Natural killer cell (primary cell): ENCODE measurements at regions of chr17 and their contacts with region 1.

Region 1: DNA sequence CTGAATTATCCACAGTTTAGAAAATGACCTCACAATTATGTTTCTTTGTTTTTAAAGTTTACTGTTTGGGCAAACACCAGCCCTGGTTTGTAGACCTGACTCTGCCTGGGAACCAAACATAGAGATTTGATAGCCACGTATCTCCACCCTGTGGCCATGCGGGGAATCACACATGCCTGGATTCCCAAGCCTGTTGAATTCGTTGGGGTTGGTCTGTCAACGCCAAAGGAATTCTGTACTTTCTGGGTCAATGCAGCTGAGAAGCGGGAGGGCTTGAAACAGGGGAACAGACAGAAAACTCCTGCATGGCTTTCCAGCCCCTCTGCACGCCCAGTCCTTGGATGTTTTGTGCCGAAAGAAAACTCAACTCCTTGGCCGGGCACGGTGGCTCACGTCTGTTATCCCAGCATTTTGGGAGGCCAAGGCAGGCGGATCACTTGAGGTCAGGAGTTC is 27.0 kb downstream of the CD300A start:
- DNase-seq: peak; percentile 63 to 85
- ATAC-seq: peak; percentile 87 to 93 (median 90)
- H3K4me3 ChIP-seq: no peak overlapping the region
- H3K4me3 Mint-ChIP-seq: peak overlapping the region; percentile 68
- H3K27ac ChIP-seq: no peak overlapping the region
- H3K27ac Mint-ChIP-seq: peak overlapping the region; percentile 78 to 88
- H3K4me1 ChIP-seq: peaks cover 35% of the 10 kb centered on the region
- H3K4me1 Mint-ChIP-seq: peaks cover 40 to 66% of the 10 kb centered on the region in 2 donors
- H3K27me3 ChIP-seq: no peaks in the 10 kb centered on the region
- H3K27me3 Mint-ChIP-seq: no peaks in the 10 kb centered on the region
- CTCF ChIP-seq: peak; percentile 86

Region 2: GRCh38 chr17:74305865-74306654 is 187.3 kb before region 1 on chr17:
- intact Hi-C with region 1: loop called (anchors 10 kb)
- DNase-seq: no peak
- ATAC-seq: no peak
- H3K4me3 ChIP-seq: no peak overlapping the region
- H3K4me3 Mint-ChIP-seq: no peak overlapping the region
- H3K27ac ChIP-seq: no peak overlapping the region
- H3K27ac Mint-ChIP-seq: no peak overlapping the region
- H3K4me1 ChIP-seq: peaks cover 8% of the 10 kb centered on the region
- H3K4me1 Mint-ChIP-seq: peaks cover 6 to 11% of the 10 kb centered on the region in 2 donors
- H3K27me3 ChIP-seq: no peaks in the 10 kb centered on the region
- H3K27me3 Mint-ChIP-seq: no peaks in the 10 kb centered on the region
- CTCF ChIP-seq: no peak

Region 3: DNA sequence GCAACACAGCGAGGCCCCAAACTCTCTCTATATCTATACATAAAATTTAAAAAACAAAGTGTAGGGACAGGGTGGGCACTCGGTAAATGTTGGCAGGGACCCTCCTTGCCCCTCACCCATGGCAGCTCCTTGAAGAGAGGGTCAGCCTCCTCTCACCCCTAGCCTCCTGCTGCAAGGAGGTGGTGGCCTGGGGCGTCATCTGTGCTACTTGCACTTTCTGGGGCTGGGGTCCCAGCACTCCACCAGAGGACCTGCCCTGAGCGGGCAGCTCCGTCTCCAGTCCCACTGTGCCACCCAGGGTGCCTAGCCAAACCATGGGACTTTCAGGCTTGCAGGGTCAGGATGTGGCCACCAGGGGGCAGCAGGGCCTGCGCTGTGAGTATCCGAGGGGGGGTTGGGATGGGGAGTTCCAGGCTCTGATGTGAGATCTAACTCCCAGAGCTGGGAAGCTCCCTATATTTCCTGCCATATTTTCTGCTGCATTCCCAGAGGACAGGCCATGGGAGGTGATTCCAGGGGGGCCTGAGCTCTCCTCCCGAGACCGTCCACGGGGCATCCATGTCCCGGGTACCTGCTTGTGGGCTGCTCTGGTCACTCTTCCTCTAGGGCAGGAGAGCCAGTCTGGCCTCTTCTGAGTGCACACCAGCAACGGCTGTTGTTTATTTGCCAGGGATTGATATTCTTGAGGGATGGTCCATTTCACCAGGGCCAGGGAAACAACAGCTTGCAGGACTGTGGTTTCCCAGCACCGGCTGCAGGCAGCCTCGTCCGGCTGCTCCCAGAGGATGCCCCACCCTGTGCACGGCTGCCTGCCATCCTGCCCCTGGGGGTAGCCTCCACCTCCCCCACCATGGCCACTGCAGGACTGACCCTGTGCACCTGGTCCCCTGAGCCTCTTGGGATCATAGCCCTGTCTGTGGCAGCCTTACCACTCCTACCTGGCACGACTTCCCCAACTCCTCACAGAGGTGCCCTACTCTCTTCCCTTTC is 125.0 kb before region 1 on chr17:
- intact Hi-C with region 1: loop called (anchors 1 kb)
- DNase-seq: peak; percentile 78 to 87
- ATAC-seq: peak; percentile 76 to 90 (median 90)
- H3K4me3 ChIP-seq: no peak overlapping the region
- H3K4me3 Mint-ChIP-seq: peak overlapping the region; percentile 71
- H3K27ac ChIP-seq: no peak overlapping the region
- H3K27ac Mint-ChIP-seq: peak overlapping the region in 1 of 2 donors; percentile 75
- H3K4me1 ChIP-seq: peaks cover 20% of the 10 kb centered on the region
- H3K4me1 Mint-ChIP-seq: peaks cover 17 to 18% of the 10 kb centered on the region in 2 donors
- H3K27me3 ChIP-seq: peaks cover 2% of the 10 kb centered on the region
- H3K27me3 Mint-ChIP-seq: peaks cover 0 to 6% of the 10 kb centered on the region in 2 donors
- CTCF ChIP-seq: peak; percentile 93

Region 4: DNA sequence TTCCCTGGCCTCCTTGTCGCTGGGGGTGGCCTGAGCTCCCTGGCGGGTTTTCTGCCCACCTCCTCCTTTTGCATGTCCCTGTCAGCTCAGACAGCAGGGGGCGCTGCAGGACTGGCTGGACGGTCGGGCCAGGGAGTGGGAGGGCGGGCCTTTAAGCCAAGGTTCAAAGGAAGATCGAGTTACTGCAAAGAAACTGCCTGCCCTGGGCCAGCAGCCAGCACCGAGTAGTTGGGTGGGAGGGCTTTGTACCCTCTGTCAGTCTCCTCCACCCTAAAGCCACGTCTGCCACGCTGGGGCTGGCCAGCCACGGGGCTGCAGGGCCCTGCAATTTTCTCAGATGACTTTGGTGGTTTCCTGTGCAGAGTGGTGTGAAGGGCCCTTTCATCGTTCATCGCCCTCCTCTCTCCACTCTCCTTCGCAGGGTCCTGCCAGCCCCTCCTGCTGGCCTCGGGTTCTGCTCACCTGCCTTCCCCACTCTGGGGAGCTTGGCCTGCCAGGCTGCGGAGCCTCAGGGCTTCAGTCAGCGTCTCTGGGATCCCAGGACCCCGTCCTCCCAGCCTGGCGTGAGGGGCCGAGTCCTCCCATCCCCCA is 113.8 kb before region 1 on chr17:
- intact Hi-C with region 1: loop called (anchors 1 kb)
- DNase-seq: peak; percentile 92
- ATAC-seq: peak; percentile 82 to 90 (median 87)
- H3K4me3 ChIP-seq: no peak overlapping the region
- H3K4me3 Mint-ChIP-seq: peak overlapping the region; percentile 40
- H3K27ac ChIP-seq: peak overlapping the region; percentile 51
- H3K27ac Mint-ChIP-seq: peak overlapping the region; percentile 78 to 87
- H3K4me1 ChIP-seq: peaks cover 31% of the 10 kb centered on the region
- H3K4me1 Mint-ChIP-seq: peaks cover 30 to 32% of the 10 kb centered on the region in 2 donors
- H3K27me3 ChIP-seq: no peaks in the 10 kb centered on the region
- H3K27me3 Mint-ChIP-seq: no peaks in the 10 kb centered on the region
- CTCF ChIP-seq: peak; percentile 90

Region 5: DNA sequence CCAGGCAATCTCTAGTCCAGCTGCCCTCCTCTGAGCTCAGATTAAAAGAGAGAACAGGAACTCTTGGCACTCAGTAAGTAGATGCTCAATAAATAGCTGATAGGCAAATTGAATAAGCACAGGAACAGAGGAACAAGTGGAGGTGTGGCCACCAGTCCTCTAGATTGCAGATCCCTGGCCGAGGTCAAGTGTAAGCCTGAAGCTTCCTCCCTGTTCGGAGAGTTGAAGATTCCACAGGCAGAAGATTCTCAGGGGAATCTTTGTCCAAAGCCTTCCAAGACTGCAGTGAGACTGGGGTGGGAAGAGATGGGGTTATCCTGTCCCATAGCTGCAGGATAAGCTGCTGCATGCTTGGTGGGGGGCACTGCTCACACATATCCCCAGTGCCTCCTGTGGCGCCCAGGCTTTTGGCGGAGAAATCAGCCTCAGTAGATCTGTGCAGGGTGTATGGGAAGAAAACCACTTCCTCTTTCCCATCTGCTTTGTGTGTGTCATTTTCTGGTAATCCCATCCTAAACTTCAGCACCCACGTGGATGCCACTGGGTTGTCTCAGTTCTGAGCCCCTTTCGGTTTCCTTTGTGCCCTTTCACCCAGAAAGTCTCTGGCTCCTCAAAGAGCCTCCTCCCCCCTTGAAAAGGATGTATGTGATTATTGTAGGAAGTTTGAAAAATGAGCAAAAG is 14.8 kb before region 1 on chr17:
- intact Hi-C with region 1: loop called (anchors 1 kb)
- DNase-seq: peak in 1 of 2 donors; percentile 72
- ATAC-seq: peak; percentile 35 to 75 (median 38)
- H3K4me3 ChIP-seq: no peak overlapping the region
- H3K4me3 Mint-ChIP-seq: peak overlapping the region; percentile 73
- H3K27ac ChIP-seq: peak overlapping the region; percentile 73
- H3K27ac Mint-ChIP-seq: peak overlapping the region; percentile 92 to 93
- H3K4me1 ChIP-seq: peaks cover 81% of the 10 kb centered on the region
- H3K4me1 Mint-ChIP-seq: peaks cover 86 to 97% of the 10 kb centered on the region in 2 donors
- H3K27me3 ChIP-seq: no peaks in the 10 kb centered on the region
- H3K27me3 Mint-ChIP-seq: no peaks in the 10 kb centered on the region
- CTCF ChIP-seq: no peak